Naive thymus-derived CD4-positive, alpha-beta T cell (primary cell): ENCODE measurements at regions of chr14 and their contacts with region 1.

Region 1: GRCh38 chr14:64891839-64892375 is 12.2 kb upstream of the SPTB start:
- DNase-seq: peak in 7 of 9 donors; percentile 41 to 68 (median 61)
- ATAC-seq: peak; percentile 90
- H3K4me3 ChIP-seq: no peak overlapping the region
- H3K4me3 Mint-ChIP-seq: no peak overlapping the region
- H3K27ac ChIP-seq: no peak overlapping the region
- H3K27ac Mint-ChIP-seq: no peak overlapping the region
- H3K4me1 ChIP-seq: no peaks in the 10 kb centered on the region
- H3K4me1 Mint-ChIP-seq: peaks cover 0 to 3% (median 0%) of the 10 kb centered on the region in 7 donors
- H3K27me3 ChIP-seq: no peaks in the 10 kb centered on the region
- H3K27me3 Mint-ChIP-seq: peaks cover 0 to 39% (median 9%) of the 10 kb centered on the region in 5 donors

Region 2: DNA sequence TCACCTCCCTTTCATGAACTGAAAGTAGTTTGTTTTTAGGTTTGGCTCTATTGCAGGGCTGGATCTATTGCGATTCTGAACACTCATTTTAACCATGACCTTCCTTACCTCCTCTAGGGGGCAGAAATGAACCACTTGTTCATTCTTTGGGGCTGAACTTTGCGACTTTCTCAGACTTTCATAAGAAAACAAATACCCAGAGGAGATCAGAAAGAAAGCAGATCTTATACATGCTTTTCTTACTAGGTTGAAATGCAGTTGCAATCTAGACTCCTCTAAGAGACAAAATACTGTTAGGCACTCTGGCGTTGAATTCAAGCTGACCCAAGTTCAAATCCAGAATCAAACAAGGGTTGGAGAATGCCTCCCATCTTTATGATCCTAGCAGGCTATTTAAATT is 220.3 kb before region 1 on chr14:
- CTCF ChIA-PET with region 1: interaction called, 26 read pairs
- POLR2A ChIA-PET with region 1: no interaction called
- intact Hi-C with region 1: loop called (anchors 5 kb)
- DNase-seq: peak in 7 of 9 donors; percentile 25 to 66 (median 50)
- ATAC-seq: peak; percentile 64
- H3K4me3 ChIP-seq: no peak overlapping the region
- H3K4me3 Mint-ChIP-seq: no peak overlapping the region
- H3K27ac ChIP-seq: no peak overlapping the region
- H3K27ac Mint-ChIP-seq: no peak overlapping the region
- H3K4me1 ChIP-seq: peaks cover 7 to 16% of the 10 kb centered on the region in 2 donors
- H3K4me1 Mint-ChIP-seq: peaks cover 9 to 38% (median 15%) of the 10 kb centered on the region in 7 donors
- H3K27me3 ChIP-seq: no peaks in the 10 kb centered on the region
- H3K27me3 Mint-ChIP-seq: peaks cover 0 to 26% (median 0%) of the 10 kb centered on the region in 5 donors

Region 3: GRCh38 chr14:64800000-64800399 is 91.9 kb before region 1 on chr14:
- CTCF ChIA-PET with region 1: interaction called, 5 read pairs
- POLR2A ChIA-PET with region 1: no interaction called
- intact Hi-C with region 1: loop called in 1 of 2 experiments (anchors 5 kb)
- DNase-seq: peak in 1 of 9 donors; percentile 13
- ATAC-seq: peak; percentile 9
- H3K4me3 ChIP-seq: no peak overlapping the region
- H3K4me3 Mint-ChIP-seq: no peak overlapping the region
- H3K27ac ChIP-seq: no peak overlapping the region
- H3K27ac Mint-ChIP-seq: no peak overlapping the region
- H3K4me1 ChIP-seq: no peaks in the 10 kb centered on the region
- H3K4me1 Mint-ChIP-seq: peaks cover 0 to 2% (median 0%) of the 10 kb centered on the region in 7 donors
- H3K27me3 ChIP-seq: no peaks in the 10 kb centered on the region
- H3K27me3 Mint-ChIP-seq: peaks cover 0 to 17% (median 0%) of the 10 kb centered on the region in 5 donors

Region 4: DNA sequence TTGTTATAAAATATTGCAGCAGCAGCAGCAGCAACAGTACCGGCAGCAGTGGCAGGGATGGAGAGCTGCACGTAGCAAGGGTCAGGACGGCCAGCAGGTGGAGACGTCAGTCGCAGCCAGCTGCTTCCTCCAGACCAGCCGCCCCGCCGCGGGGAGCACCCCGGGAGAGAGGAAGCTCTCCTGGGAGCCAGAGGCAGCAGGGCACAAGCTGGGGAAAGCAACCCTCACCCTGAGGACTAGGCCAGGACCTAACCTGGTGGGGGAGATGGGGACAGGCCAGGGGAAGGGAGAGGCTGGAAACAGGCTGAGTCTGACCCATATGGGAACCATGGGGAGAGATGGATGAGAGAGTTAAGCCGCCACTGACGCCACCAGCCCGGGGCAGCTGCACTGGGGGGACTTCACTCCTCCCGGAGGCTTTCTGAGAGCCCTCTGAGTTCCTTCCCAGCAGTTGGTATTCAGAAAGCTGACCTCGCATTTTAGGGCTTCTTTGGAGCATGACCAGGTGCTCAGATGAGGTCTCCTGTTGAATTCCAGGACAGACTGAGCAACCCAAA is 68.5 kb before region 1 on chr14:
- CTCF ChIA-PET with region 1: interaction called, 141 read pairs
- POLR2A ChIA-PET with region 1: interaction called, 9 read pairs
- intact Hi-C with region 1: loop called (anchors 5 kb)
- DNase-seq: peak; percentile 41 to 68 (median 59)
- ATAC-seq: peak; percentile 87
- H3K4me3 ChIP-seq: peak overlapping the region; percentile 19
- H3K4me3 Mint-ChIP-seq: peak overlapping the region in 5 of 10 donors; percentile 16 to 72 (median 60)
- H3K27ac ChIP-seq: no peak overlapping the region
- H3K27ac Mint-ChIP-seq: no peak overlapping the region
- H3K4me1 ChIP-seq: no peaks in the 10 kb centered on the region
- H3K4me1 Mint-ChIP-seq: peaks cover 0 to 9% (median 5%) of the 10 kb centered on the region in 7 donors
- H3K27me3 ChIP-seq: peaks cover 0 to 4% of the 10 kb centered on the region in 2 donors
- H3K27me3 Mint-ChIP-seq: peaks cover 6 to 56% (median 10%) of the 10 kb centered on the region in 5 donors

Region 5: DNA sequence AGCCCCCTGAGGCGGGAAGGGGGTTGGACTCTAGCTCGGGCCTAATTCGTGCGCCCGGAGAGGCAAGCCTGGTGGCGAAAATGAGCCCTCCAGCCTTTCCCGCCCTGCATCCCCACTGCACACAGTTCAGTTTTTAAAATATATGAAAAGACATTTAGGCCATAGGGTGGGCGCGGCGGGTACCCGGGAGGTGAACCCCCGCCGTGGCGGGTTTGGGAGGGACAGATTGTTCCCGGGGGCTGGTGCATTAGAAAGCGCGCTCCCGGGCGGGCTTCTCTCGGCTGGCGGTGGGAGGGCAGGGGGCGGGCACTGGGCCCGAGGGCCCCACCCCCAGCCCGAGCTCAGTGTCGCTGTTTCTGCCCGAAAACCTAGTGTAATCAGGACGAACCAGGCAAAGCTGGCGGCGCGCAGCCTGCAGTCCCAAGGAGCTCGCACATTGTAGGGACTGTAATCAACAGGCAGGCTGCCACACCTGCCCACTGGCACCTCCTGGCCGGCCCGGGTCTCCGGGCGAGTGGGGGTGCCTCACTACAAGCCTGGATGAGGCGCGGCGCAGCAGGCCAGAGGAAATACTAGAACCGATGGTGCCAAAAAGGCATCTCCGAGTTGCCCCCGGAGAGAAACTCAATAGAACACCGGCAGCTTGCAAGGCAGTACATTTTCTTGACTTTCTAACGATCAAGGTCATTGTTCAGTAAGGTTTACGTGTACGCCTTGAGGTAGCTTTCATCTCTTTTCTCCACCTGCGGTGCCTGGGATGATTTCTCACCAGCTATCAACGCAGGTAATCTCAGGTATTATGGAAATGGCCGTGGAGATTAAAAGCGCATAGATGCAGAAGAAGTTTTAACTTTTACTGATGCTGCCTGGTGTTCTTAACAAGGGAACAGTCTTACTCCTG is 11.4 kb before region 1 on chr14:
- CTCF ChIA-PET with region 1: interaction called, 51 read pairs
- POLR2A ChIA-PET with region 1: interaction called, 3 read pairs
- intact Hi-C with region 1: no loop called
- DNase-seq: peak; percentile 29 to 68 (median 54)
- ATAC-seq: peak; percentile 85
- H3K4me3 ChIP-seq: peak overlapping the region; percentile 67
- H3K4me3 Mint-ChIP-seq: peak overlapping the region; percentile 85 to 92 (median 88)
- H3K27ac ChIP-seq: peak overlapping the region; percentile 20
- H3K27ac Mint-ChIP-seq: peak overlapping the region in 4 of 9 donors; percentile 14 to 59 (median 36)
- H3K4me1 ChIP-seq: peaks cover 0 to 4% of the 10 kb centered on the region in 2 donors
- H3K4me1 Mint-ChIP-seq: peaks cover 0 to 11% (median 8%) of the 10 kb centered on the region in 7 donors
- H3K27me3 ChIP-seq: peaks cover 0 to 7% of the 10 kb centered on the region in 2 donors
- H3K27me3 Mint-ChIP-seq: peaks cover 13 to 81% (median 19%) of the 10 kb centered on the region in 5 donors